H1 (cell line): ENCODE measurements at regions of chr18 and their contacts with region 1.

Region 1: DNA sequence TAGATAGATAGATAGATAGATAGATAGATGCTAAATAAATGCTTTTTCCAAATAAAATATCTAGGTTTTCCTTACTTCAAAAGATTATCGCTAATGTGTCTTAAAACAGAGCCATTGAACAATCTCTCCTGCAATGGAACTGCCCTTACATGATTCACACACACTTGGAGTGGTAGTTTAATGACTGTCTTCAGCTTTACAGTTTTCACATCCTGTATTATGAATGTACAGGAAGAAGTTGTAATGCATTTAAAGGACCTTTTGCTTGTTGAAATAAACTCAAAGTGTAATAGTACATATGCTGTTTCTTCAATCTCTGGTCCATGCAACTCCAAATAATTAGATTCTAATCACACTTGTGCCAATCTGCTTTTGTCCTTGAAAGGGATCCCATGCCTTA is 797.6 kb upstream of the CDH2 start:
- DNase-seq: no peak
- H3K4me3 ChIP-seq: no peak overlapping the region
- H3K27ac ChIP-seq: no peak overlapping the region
- H3K4me1 ChIP-seq: no peaks in the 10 kb centered on the region
- H3K27me3 ChIP-seq: no peaks in the 10 kb centered on the region
- CTCF ChIP-seq: no peak
- EP300 ChIP-seq: no peak
- POLR2A ChIP-seq: no peak
- RAD21 ChIP-seq: no peak

Region 2: GRCh38 chr18:28961669-28962228 is 12.8 kb before region 1 on chr18:
- CTCF ChIA-PET with region 1: interaction called, 10 read pairs
- POLR2A ChIA-PET with region 1: no interaction called
- DNase-seq: peak; percentile 21 to 49
- H3K4me3 ChIP-seq: no peak overlapping the region
- H3K27ac ChIP-seq: no peak overlapping the region
- H3K4me1 ChIP-seq: 0 out of 7 replicates have a peak, but pooled peaks cover 0 to 2% (median 0%) of the 10 kb centered on the region in 4 experiments
- H3K27me3 ChIP-seq: no peaks in the 10 kb centered on the region
- CTCF ChIP-seq: peak; percentile 18 to 84 (median 71)
- EP300 ChIP-seq: no peak
- POLR2A ChIP-seq: no peak
- RAD21 ChIP-seq: peak; percentile 87 to 93